Calu3 (cell line): ENCODE measurements at regions of chrX and their contacts with region 1.

Region 1: DNA sequence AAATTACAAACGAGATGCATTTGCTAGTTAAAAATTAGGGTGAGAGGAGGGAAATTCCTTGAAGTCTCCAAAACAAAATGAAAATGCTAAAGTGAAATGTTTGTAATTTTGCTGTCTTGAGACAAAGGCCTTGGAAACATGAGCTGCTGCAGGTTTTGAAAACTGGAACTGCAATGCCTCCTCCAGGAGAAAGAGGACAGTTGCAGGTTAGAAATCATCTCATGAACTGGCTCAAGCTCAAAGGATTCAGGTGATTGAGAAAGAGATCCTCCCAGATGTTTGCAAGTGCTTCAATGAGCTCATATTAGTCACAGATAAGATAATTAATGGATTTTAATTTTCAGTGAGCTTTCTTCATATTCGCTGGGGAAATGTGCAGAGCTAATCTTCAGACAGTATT is 32.4 kb downstream of the SMPX start:
- DNase-seq: no peak
- H3K4me3 Mint-ChIP-seq: no peak overlapping the region
- H3K27ac Mint-ChIP-seq: no peak overlapping the region
- H3K4me1 Mint-ChIP-seq: peaks cover 9% of the 10 kb centered on the region
- H3K27me3 Mint-ChIP-seq: no peaks in the 10 kb centered on the region
- CTCF ChIP-seq: peak; percentile 14

Region 2: DNA sequence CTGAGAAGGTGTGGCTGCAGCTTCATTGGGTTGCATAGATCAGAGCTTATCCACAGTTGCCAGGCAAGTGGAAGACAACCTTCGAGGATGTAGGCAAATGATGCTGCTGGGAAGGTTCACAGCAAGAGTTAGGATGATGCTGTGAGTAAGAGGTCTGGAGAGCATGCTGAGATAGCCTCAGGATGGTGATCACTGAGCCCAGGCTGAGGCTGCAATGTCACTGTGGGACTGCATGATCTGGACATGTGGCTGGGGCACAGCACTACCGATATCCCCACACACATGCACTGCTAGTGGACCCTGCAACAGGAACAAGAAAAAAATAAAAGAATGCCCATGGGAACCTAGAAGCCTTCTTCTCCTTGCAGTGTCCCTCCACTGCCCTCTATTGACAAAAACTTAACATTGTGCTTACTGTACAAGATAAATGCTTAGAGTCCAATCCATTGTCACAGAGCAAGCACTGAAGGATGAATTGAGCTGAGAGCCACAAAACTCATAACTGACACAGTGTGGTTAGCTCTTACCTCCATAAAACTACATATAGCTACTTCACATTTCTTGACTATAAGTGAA is 245.7 kb before region 1 on chrX:
- CTCF ChIA-PET with region 1: interaction called, 5 read pairs
- intact Hi-C with region 1: loop called (anchors 5 kb)
- DNase-seq: peak; percentile 11
- H3K4me3 Mint-ChIP-seq: no peak overlapping the region
- H3K27ac Mint-ChIP-seq: no peak overlapping the region
- H3K4me1 Mint-ChIP-seq: no peaks in the 10 kb centered on the region
- H3K27me3 Mint-ChIP-seq: no peaks in the 10 kb centered on the region
- CTCF ChIP-seq: peak; percentile 48

Region 3: GRCh38 chrX:21524008-21524407 is 201.5 kb before region 1 on chrX:
- CTCF ChIA-PET with region 1: no interaction called
- intact Hi-C with region 1: no loop called
- DNase-seq: no peak
- H3K4me3 Mint-ChIP-seq: no peak overlapping the region
- H3K27ac Mint-ChIP-seq: no peak overlapping the region
- H3K4me1 Mint-ChIP-seq: no peaks in the 10 kb centered on the region
- H3K27me3 Mint-ChIP-seq: no peaks in the 10 kb centered on the region
- CTCF ChIP-seq: no peak

Region 4: DNA sequence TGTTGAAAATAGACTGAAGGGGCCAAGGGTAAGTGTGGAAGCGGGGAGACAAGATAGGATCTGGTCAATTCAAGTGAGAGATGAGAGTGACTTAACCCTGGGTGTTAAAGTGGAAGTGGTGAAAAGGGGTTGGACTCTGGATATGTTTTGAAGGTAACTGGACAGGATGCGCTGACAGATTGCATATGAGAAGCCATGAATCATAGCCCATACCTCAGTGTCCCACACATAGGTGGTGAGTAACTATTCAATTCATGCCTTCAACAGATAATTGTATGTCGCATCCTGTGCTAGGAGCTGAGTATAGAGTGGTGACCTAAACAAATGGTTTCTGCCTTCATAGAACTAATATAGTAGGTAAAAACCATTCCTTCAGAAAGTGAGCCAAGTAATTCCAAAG is 144.0 kb before region 1 on chrX:
- CTCF ChIA-PET with region 1: no interaction called
- intact Hi-C with region 1: no loop called
- DNase-seq: no peak
- H3K4me3 Mint-ChIP-seq: no peak overlapping the region
- H3K27ac Mint-ChIP-seq: no peak overlapping the region
- H3K4me1 Mint-ChIP-seq: no peaks in the 10 kb centered on the region
- H3K27me3 Mint-ChIP-seq: no peaks in the 10 kb centered on the region
- CTCF ChIP-seq: no peak